Left lung (tissue), 14 donors: ENCODE measurements at regions of chr3 and their contacts with region 1.

Region 1: GRCh38 chr3:24773798-24774197 is 279.1 kb upstream of the THRB start:
- DNase-seq: peak in 3 of 4 donors; percentile 63 to 87 (median 63)
- ATAC-seq: peak; percentile 90
- H3K4me3 ChIP-seq: no peak overlapping the region
- H3K27ac ChIP-seq: no peak overlapping the region
- H3K4me1 ChIP-seq: no peaks in the 10 kb centered on the region
- H3K27me3 ChIP-seq: no peaks in the 10 kb centered on the region
- CTCF ChIP-seq: peak; percentile 54 to 81

Region 2: DNA sequence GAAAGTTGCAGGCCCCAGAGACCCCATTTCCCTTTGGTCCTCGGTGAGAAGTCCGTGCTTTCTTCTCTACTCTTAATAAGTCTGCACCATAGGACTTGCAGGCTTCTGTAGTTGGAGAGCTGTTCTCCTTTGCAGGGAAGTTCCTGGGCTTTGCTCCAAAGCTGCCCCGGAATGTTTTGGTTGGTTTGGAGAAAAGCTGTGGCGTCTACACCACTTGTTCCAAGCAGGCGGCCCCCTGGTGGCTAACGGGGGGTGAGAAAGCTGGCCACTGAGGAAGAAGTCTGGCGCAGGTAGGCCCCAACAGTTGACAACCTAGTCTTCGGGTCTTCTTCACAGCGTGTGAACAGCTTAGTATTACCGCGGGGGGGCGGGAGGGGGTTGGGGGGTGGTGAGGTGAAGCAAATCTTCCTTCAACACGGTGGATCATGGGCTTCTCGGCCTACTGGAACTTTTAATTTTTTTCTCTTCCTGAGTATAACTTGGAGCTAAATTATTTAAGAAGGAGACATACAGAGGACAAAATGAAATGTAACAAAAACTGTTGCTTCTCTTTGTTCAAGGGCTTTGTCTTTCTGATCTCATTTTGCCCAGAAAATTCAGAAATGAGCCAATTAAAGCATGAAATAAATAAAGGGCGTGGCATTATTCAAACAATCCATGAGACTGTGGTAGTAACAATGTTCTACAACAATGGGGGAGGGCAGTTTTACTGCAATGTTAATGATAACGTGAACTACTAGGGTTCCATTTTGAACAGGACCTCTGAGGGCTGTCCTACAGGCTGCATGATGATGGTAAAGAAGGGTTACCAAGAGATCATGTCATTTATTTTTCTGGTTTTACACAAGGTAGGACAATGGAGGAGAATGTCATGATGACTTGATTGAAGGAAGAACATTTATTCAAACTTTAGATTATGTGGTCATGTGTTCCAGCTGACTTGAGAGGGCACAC is 277.0 kb before region 1 on chr3:
- intact Hi-C with region 1: no loop called
- DNase-seq: peak in 3 of 4 donors; percentile 60 to 77 (median 66)
- ATAC-seq: peak; percentile 14
- H3K4me3 ChIP-seq: no peak overlapping the region
- H3K27ac ChIP-seq: no peak overlapping the region
- H3K4me1 ChIP-seq: peaks cover 0 to 14% of the 10 kb centered on the region in 2 donors
- H3K27me3 ChIP-seq: peaks cover 0 to 41% of the 10 kb centered on the region in 2 donors
- CTCF ChIP-seq: peak in 1 of 2 donors; percentile 29

Region 3: DNA sequence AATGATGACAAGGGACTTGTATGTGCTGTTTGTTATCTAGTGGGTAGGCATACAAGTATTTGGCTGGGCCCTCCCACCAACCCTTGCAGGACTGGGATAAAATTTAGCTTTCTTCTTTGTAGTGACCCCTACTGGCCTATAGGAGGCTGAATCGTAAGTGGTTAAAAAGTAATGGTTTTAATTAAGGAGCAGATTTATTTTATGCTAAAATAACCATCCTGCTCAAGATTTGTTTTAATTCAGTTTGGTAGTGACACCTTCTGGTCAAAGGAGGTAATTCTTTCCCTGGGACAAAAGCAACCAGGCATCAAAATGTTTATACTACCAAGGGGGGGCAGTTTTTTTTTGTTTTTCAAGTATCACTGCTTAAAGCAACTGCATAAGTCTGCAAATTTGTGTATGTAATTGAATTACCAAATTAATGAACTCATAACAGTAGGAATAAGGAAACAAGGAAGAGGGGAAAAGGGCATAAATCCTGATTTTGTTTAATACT is 820.3 kb after region 1 on chr3:
- intact Hi-C with region 1: loop called in 1 of 2 experiments (anchors 10 kb)
- DNase-seq: peak in 2 of 4 donors; percentile 60 to 77
- ATAC-seq: peak; percentile 77
- H3K4me3 ChIP-seq: no peak overlapping the region
- H3K27ac ChIP-seq: no peak overlapping the region
- H3K4me1 ChIP-seq: peaks cover 9 to 25% of the 10 kb centered on the region in 2 donors
- H3K27me3 ChIP-seq: no peaks in the 10 kb centered on the region
- CTCF ChIP-seq: peak; percentile 68 to 82